ENCODE measurements at regions of chr20 and their contacts with region 1.

Region 1: GRCh38 chr20:13221673-13222318 is 722 bp downstream of the ISM1 start:
- DNase-seq: peak; percentile 76
- H3K4me3 Mint-ChIP-seq: peak overlapping the region; percentile 69
- H3K27ac Mint-ChIP-seq: no peak overlapping the region
- H3K4me1 Mint-ChIP-seq: peaks cover 15% of the 10 kb centered on the region
- H3K27me3 Mint-ChIP-seq: peaks cover 38% of the 10 kb centered on the region

Region 2: DNA sequence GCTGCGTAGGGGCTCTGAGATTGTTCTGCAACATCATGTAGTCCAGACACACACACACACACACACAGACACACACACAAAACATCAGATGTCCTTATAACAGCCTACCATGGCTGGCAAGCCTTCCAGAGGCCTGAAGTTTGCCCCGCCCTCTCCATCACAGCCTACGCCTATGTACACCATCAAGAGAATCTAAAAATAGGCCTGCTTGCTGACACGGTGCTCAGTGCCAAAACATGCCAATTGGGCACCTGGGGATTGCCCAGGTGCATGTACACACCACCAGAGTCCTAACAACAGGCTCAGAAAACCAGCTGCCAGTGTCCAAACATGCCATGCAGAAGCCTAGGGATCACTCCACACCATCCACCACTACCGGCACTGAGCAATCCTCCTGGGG is 604.7 kb before region 1 on chr20:
- CTCF ChIA-PET with region 1: no interaction called
- POLR2A ChIA-PET with region 1: no interaction called
- intact Hi-C with region 1: no loop called
- DNase-seq: no peak
- H3K4me3 Mint-ChIP-seq: no peak overlapping the region
- H3K27ac Mint-ChIP-seq: no peak overlapping the region
- H3K4me1 Mint-ChIP-seq: no peaks in the 10 kb centered on the region
- H3K27me3 Mint-ChIP-seq: no peaks in the 10 kb centered on the region

Region 3: DNA sequence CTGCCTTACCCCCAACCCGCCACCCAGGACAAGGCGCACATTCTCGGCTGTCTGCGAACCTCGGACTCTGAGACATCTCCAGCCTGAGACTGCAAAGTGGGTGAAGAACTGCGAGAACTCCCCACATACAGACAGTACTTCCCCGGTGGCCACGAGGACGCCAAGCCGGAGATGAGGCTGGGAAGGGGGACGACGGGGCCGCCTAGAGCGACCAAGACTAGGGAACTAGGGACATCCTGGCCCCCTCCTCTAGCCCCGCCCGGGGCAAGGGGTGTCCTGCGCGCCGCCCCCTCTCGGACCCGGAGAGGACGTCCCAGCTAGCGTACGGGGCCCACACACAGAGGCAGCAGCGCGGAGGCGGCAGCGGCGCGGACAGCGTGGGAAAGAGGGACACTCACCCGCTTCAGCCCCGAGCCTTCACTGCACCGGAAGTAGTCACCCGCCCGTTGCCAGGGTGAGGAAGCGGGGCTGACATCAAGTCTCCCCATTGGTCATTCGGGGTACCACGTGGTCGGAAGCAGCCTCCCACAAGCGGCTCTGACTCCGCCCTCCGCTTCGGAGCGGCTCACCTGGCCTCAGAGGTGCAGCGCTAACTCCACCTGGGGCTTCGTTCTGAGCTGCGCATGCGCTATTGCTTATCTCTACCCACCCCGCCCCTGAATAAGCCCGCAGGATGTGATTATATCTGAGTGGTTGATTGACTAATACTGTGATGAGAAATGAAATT is 416.9 kb after region 1 on chr20 and contains the start of gene TASP1:
- CTCF ChIA-PET with region 1: no interaction called
- POLR2A ChIA-PET with region 1: no interaction called
- intact Hi-C with region 1: loop called (anchors 10 kb)
- DNase-seq: peak; percentile 98
- H3K4me3 Mint-ChIP-seq: peak within 1 kb of the TSS; percentile 87
- H3K27ac Mint-ChIP-seq: peak within 1 kb of the TSS; percentile 80
- H3K4me1 Mint-ChIP-seq: peaks cover 19% of the 10 kb centered on the region
- H3K27me3 Mint-ChIP-seq: peaks cover 6% of the 10 kb centered on the region
- total RNA-seq, gene TASP1: 8.2 to 8.9 TPM